Heart left ventricle (tissue), 16 donors: ENCODE measurements at regions of chr13 and their contacts with region 1.

Region 1: DNA sequence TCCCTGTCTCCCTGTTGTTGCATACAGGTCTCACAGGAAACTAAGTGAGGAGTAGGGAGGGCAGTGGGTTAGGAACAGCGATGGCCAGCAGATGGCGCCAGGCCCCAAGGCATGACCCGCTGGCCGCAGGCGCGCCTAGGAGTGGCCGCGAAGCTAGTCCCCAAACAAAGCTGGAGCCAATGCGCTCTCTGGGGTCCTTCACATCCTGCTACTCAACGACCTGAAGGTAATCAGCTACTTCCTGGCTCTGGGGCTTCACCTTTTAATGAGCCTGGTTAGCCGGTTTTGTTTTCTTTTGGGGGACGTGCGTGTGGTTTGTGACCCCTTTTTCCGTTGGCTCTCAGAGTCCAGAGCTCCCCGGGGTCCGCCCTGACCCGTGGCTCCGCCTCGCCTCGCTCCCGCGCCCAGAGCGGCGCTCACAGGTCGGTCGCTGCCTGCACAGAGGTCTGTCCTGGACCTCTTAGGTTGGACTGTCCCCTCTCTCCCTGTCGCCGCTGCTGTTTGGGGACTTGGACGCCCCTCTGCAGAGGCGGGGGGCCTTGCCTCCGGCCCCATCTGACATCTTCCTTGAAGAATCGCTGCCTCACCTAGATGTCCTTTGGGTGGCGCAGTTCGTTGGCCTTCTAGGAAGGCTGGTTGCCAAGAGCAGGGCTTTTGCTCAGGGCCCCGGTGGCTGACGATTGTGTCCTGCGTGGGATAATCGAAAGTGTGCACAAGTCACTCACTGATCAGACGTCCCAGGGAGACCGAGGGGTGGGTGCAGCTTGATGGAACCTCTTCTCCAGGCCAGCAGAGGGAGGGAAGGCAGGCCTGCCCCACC is 62.1 kb upstream of the GTF3A start:
- DNase-seq: peak; percentile 77 to 92 (median 84)
- ATAC-seq: peak; percentile 85 to 96 (median 95)
- H3K4me3 ChIP-seq: peak overlapping the region in 11 of 12 donors; percentile 17 to 62 (median 50)
- H3K27ac ChIP-seq: no peak overlapping the region
- H3K4me1 ChIP-seq: peaks cover 0 to 9% (median 5%) of the 10 kb centered on the region in 12 donors
- H3K27me3 ChIP-seq: peaks cover 0 to 15% (median 0%) of the 10 kb centered on the region in 9 donors
- CTCF ChIP-seq: peak; percentile 84 to 98 (median 94)
- POLR2A ChIP-seq: no peak

Region 2: DNA sequence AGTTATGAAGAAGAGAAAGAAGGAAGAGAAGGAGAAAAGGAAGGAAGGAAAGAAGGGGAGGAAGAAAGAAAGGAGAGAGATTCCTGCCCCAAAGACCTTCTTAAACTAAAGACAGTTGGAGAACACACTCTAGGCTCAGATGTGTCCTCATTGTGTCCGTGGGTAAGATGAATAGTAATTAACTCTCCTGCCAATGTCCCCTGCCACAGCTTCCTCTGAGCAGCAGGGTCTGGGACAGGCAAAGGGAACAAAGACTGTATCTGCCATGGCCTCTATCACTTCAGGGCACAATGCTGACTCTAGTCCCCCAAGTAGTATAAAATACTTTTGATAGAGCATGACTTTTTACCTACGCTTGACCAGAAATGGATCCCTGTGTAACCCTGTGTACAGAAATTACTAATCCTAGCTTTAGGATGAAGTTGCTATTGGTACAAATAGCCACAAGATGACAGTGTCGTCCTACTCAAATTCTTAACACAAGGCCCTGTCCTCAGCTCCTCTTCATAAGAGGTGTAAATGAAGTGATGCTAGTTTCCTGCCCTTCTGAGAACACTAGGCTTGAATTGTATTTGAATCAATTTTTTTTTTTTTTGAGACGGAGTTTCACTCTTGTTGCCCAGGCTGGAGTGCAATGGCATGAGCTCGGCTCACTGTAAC is 415.5 kb before region 1 on chr13:
- intact Hi-C with region 1: loop called (anchors 1 to 10 kb)
- DNase-seq: no peak
- ATAC-seq: peak; percentile 71 to 81 (median 78)
- H3K4me3 ChIP-seq: no peak overlapping the region
- H3K27ac ChIP-seq: no peak overlapping the region
- H3K4me1 ChIP-seq: peaks cover 0 to 11% (median 1%) of the 10 kb centered on the region in 12 donors
- H3K27me3 ChIP-seq: no peaks in the 10 kb centered on the region
- CTCF ChIP-seq: peak; percentile 58 to 85 (median 76)
- POLR2A ChIP-seq: no peak

Region 3: DNA sequence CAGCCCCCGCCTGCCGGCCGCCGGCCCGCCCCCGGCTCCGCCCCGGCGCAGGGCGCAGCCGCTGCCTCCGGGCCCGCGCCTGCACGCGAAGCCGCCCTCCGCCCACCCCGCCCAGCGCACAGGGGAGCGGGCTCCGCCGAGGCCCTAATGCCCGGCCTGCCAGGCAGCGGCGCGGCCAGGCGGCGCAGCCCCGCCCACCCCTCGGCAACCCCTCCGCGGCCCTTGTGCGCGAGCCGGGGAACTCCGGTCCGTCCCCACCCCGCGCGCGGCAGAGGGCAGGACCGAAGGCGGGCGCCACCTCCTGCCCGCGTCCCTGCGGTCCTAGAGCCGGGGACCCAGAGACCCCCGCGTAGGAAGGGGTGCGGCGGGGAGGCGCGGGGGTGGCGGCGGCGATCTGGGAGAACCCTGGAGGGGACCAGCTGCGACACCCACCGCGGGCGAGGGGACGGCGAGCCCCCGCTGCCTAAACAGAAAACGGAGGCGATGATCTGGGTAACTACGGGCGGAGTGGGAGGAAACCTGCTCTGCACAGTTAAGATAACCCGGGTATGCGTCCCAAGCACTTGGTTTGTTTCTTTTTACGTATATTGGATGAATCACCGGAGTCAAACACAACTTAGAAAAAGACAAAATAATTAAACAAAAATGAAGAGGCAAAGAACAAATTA is 190.3 kb before region 1 on chr13:
- intact Hi-C with region 1: loop called in 1 of 10 experiments (anchors 10 kb)
- DNase-seq: peak; percentile 93 to 96 (median 95)
- ATAC-seq: peak; percentile 93 to 99 (median 96)
- H3K4me3 ChIP-seq: peak overlapping the region; percentile 22 to 93 (median 75)
- H3K27ac ChIP-seq: peak overlapping the region; percentile 76 to 99 (median 93)
- H3K4me1 ChIP-seq: peaks cover 8 to 54% (median 35%) of the 10 kb centered on the region in 12 donors
- H3K27me3 ChIP-seq: no peaks in the 10 kb centered on the region
- CTCF ChIP-seq: peak in 7 of 12 donors; percentile 16 to 48 (median 28)
- POLR2A ChIP-seq: no peak

Region 4: DNA sequence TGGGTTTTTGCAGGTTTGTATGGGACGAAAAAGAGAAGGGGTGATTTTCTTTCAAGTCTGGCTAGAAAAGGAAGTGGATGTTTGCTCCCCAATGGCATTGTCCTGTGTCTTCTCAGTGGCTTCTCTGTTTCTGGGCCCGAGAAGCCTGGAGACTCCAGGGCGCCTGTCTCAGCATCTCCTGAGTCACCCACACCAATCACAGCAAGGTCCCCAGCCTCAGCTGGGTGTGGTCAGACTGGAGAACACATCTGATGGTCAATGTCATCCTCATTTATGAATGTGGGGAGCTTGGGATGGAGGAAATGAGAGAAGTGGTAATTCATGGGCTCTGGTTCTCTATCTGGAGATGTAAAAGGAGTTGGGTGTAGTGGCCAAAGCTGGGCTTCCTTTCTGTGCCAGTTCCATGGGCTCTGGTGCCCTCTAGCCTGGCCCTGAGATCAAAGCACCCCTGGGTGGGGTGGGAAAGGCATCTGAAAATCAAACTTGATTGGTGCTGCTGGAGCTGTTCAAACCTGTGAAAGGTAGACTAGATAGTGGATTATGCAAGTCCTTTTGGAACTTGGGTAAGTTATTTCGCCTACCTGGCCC is 78.3 kb before region 1 on chr13:
- intact Hi-C with region 1: loop called in 2 of 10 experiments (anchors 10 kb)
- DNase-seq: no peak
- ATAC-seq: peak; percentile 71 to 83 (median 78)
- H3K4me3 ChIP-seq: no peak overlapping the region
- H3K27ac ChIP-seq: no peak overlapping the region
- H3K4me1 ChIP-seq: no peaks in the 10 kb centered on the region
- H3K27me3 ChIP-seq: no peaks in the 10 kb centered on the region
- CTCF ChIP-seq: peak in 11 of 12 donors; percentile 19 to 60 (median 40)
- POLR2A ChIP-seq: no peak

Region 5: GRCh38 chr13:27980280-27980998 is 618.2 kb after region 1 on chr13:
- intact Hi-C with region 1: loop called in 9 of 10 experiments (anchors 1 to 5 kb)
- DNase-seq: no peak
- ATAC-seq: no peak
- H3K4me3 ChIP-seq: no peak overlapping the region
- H3K27ac ChIP-seq: no peak overlapping the region
- H3K4me1 ChIP-seq: peaks cover 0 to 37% (median 11%) of the 10 kb centered on the region in 12 donors
- H3K27me3 ChIP-seq: peaks cover 67 to 99% (median 89%) of the 10 kb centered on the region in 9 donors
- CTCF ChIP-seq: no peak
- POLR2A ChIP-seq: no peak